Testis (tissue), 5 donors: ENCODE measurements at regions of chr9 and their contacts with region 1.

Region 1: DNA sequence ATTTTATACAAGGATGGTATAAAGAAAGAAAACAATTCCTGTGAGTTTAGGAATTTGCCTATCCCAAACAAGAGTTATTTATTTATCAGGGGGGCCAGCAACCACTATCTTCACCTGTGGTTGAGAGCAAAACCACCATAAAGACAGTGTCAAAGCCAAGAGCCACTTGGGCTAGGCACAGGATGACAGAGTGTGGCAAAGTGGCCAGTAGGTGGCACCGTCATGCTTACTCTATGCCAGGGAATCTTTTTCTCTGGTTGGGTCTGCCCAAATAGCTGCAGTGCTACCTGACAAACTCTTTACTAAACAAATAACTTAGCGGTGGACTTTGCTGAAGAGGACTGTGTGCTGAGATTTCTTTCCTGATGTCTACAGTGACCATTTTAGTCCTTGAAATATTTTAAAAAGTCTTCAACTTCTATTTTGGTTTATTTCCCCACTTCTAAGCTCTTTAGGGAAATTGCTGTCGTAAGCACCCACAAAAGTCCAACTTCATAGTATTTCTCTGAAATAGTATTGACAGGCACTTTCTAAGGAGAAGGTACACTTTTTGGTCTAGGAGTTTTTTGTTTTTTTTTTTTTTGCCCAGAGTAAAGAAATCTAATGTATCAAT is 285.0 kb downstream of the RFX3 start:
- DNase-seq: peak; percentile 78
- H3K4me3 ChIP-seq: no peak overlapping the region
- H3K27ac ChIP-seq: no peak overlapping the region
- H3K4me1 ChIP-seq: no peaks in the 10 kb centered on the region
- H3K27me3 ChIP-seq: no peaks in the 10 kb centered on the region
- CTCF ChIP-seq: peak; percentile 48 to 66 (median 54)
- POLR2A ChIP-seq: no peak

Region 2: GRCh38 chr9:2859776-2860379 is 380.9 kb before region 1 on chr9:
- intact Hi-C with region 1: loop called (anchors 10 kb)
- DNase-seq: peak; percentile 88
- H3K4me3 ChIP-seq: no peak overlapping the region
- H3K27ac ChIP-seq: no peak overlapping the region
- H3K4me1 ChIP-seq: no peaks in the 10 kb centered on the region
- H3K27me3 ChIP-seq: no peaks in the 10 kb centered on the region
- CTCF ChIP-seq: peak in 2 of 3 experiments; percentile 49 to 65
- POLR2A ChIP-seq: no peak

Region 3: DNA sequence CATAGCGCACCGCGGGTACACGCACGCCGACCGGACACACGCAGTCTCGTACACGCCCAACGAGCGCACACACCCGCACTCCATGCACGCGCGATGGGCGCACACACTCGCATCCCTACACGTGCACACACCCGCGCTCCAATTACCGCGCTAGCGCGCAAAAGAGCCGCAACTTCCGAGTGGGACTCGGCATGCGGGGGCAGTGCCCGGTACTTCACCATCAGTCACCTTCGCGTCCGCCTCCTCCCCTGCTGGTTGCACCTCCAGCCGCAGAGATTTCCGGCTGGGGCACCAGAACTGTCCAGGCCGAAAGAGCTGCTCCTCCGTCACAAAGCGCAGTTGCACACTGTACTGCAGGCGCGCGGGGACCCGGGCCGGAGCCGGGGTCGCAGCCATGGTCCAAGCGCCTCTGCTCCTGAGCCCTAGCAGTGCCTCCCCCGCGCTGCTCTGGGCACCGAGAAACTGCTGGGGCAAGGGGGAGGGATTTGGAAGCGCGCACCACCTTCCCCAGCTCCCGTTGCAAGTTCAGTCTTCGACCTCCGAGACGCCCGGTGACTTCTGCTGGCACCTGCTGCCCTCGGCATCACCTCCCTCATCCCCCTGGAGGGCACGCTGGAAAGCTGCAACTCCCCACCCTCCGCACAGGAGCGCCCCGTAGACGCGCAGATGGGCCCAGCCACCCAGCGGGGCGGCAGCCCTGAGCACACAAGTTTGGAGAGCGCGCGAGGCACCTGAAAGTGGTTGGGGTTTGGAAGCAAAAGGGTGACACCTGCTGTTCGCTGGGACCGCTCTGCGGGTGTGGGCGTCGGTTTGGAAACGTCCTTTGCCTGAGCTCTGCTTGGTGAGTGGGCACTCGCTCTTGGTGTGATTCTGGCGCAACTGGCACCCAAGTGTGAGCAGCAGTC is 59.5 kb before region 1 on chr9:
- intact Hi-C with region 1: no loop called
- DNase-seq: peak; percentile 38
- H3K4me3 ChIP-seq: peak overlapping the region in 1 of 2 donors; percentile 38
- H3K27ac ChIP-seq: no peak overlapping the region
- H3K4me1 ChIP-seq: peaks cover 4% of the 10 kb centered on the region
- H3K27me3 ChIP-seq: no peaks in the 10 kb centered on the region
- CTCF ChIP-seq: peak in 1 of 3 experiments; percentile 8
- POLR2A ChIP-seq: no peak

Region 4: DNA sequence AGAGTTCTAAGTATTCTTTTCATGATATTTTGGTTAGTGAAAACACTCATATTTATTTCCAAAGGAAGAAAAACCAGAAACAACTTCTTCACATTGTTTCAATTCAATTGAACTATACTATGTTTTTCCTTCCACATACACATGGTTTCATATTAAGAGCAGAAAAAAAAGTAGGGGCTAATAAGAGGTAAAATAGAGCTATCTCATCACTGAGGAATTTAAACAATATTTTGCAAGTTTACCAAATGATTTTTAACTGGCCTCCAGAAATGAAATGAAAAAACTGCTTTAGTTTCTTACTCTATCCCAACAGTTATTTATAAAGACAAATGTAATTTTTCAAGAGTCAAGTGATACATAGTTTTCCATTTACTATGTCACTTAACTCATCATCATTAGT is 51.5 kb after region 1 on chr9:
- intact Hi-C with region 1: no loop called
- DNase-seq: no peak
- H3K4me3 ChIP-seq: no peak overlapping the region
- H3K27ac ChIP-seq: no peak overlapping the region
- H3K4me1 ChIP-seq: no peaks in the 10 kb centered on the region
- H3K27me3 ChIP-seq: no peaks in the 10 kb centered on the region
- CTCF ChIP-seq: no peak
- POLR2A ChIP-seq: no peak